WTC11 (cell line): ENCODE measurements at regions of chr22 and their contacts with region 1.

Region 1: DNA sequence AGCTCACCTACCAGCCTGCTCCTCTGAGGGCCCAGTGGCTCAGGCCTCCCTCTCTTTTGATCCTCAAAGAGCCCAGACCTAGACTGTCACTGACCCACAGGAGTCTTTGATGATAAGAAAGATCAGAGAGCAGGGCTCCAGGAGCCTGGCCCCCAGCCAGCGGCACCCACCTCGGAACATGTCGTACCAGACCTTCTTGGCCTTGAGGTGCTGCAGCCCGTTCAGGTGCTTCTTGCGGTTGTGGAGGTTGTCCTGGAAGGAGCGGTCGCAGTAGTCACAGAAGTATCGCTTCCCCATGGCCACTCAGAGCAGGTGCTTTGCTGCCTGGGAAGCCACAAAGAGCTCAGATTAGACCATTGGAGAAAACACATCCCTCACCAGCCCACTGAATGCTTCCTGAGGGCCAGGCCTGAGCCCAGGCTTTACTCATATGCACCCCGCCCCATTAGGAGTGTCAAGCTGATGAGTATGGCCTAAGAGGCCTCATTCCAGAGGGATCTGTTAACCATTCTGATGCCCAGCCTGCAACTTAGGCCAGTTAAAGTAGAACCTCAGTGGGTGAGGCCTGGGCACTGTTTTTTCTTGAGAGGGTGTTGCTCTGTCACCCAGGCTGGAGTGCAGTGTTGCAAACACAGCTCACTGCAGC is 18.4 kb downstream of the ZMAT5 start:
- DNase-seq: no peak
- ATAC-seq: no peak
- H3K4me3 Mint-ChIP-seq: no peak overlapping the region
- H3K27ac Mint-ChIP-seq: no peak overlapping the region; the same call in 1 of the 2 replicates
- H3K4me1 Mint-ChIP-seq: no peaks in the 10 kb centered on the region
- H3K27me3 Mint-ChIP-seq: no peaks in the 10 kb centered on the region; the same call in 1 of the 2 replicates
- CTCF ChIP-seq: no peak

Region 2: DNA sequence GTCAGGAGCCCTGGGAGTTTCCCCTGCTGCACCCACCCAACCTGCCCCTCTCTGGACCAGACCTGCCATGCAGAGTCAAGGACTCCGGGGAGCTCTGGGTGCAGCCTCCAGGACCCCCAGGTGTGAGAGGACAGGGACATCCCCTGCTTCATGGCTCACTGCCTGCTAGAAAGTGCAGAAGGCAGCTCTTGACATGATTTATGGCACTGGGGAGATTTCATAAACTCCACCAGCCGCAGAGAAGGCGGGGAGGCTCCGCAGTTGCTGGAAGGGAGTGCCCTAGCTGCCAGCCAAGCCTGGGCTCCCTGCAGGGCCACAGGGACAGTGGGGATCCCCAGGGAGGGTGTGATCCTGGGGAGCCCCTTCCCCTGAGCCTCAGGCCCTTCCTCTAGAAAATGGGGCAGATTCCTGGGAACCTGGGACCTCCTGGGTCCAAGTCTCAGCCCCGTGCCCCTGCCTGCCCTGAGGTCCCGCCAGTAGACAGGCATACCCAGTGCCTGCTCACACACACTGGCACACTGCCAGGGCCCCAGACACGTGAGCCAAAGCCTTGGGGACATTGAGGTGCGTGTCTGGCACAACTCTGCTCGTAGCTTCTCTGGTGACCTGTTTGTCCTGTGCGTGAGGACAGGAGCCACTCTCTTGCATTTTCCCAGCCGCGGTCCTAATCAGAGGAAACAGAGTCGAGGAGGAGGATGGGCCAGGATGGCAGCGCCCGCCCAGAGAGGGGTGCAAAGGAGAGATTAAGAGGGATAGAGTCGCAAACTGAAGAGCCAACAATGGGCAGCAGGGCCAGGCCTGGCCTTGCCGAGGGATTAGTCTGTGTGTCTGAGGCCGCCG is 14.8 kb before region 1 on chr22:
- CTCF ChIA-PET with region 1: no interaction called
- POLR2A ChIA-PET with region 1: no interaction called
- DNase-seq: no peak
- ATAC-seq: no peak
- H3K4me3 Mint-ChIP-seq: no peak overlapping the region
- H3K27ac Mint-ChIP-seq: peak overlapping the region; percentile 53; the same call in 1 of the 2 replicates
- H3K4me1 Mint-ChIP-seq: peaks cover 12% of the 10 kb centered on the region
- H3K27me3 Mint-ChIP-seq: no peaks in the 10 kb centered on the region
- CTCF ChIP-seq: no peak

Region 3: GRCh38 chr22:29871684-29872083 is 123.3 kb after region 1 on chr22:
- CTCF ChIA-PET with region 1: no interaction called
- POLR2A ChIA-PET with region 1: no interaction called
- DNase-seq: no peak
- ATAC-seq: peak; percentile 48
- H3K4me3 Mint-ChIP-seq: no peak overlapping the region
- H3K27ac Mint-ChIP-seq: peak overlapping the region; percentile 6; the same call in 1 of the 2 replicates
- H3K4me1 Mint-ChIP-seq: peaks cover 18% of the 10 kb centered on the region
- H3K27me3 Mint-ChIP-seq: no peaks in the 10 kb centered on the region
- CTCF ChIP-seq: no peak

Region 4: DNA sequence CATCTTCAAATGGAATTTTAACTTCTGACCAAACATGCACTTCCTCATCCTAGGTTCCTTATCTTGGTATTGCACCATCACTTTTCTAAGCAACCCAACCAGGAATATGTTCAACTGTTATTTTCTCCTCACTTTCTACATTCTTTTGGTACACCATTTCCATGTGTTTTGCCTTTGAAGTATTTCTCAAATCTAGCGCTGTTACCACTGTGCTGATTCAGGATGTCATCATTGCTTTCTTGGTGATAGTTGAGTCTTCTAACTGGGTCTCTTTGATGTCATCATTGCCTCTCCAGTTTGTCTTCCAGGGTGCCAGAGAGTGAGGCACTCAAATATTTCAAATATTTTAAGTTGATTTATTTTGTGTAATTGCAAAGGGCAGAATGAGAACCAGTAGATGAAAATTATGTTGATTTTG is 379.4 kb after region 1 on chr22:
- CTCF ChIA-PET with region 1: no interaction called
- POLR2A ChIA-PET with region 1: interaction called, 12 read pairs
- DNase-seq: no peak
- ATAC-seq: no peak
- H3K4me3 Mint-ChIP-seq: no peak overlapping the region
- H3K27ac Mint-ChIP-seq: no peak overlapping the region
- H3K4me1 Mint-ChIP-seq: no peaks in the 10 kb centered on the region
- H3K27me3 Mint-ChIP-seq: no peaks in the 10 kb centered on the region
- CTCF ChIP-seq: no peak